ENCODE measurements at regions of chr19 and their contacts with region 1.

Region 1: DNA sequence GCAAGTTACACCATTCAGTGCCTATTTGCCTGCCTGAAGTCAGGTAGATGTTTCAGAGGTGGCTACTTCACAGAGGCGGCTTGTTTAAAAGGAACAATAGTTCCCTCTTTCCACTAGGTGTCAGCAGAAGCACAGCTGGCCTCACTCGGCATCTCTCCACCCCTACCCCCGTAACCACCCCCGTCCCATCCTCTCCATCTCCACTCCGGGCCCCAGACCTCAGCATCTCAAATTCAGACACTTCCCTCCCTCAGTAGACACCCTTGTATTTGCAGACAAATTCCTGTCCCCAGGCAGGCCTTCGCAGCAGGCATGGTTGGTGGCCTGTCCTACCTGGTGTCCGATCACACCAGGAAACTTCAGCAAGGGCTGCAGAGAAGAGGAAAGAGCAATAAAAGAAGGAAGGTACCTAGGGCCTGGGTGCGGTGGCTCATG is 9.1 kb upstream of the DPP9 start:
- DNase-seq: no peak
- ATAC-seq: peak; percentile 85

Region 2: GRCh38 chr19:4304530-4305252 is 428.0 kb before region 1 on chr19 and contains the start of gene FSD1:
- intact Hi-C with region 1: no loop called
- DNase-seq: no peak
- ATAC-seq: no peak
- total RNA-seq, gene FSD1: not detected

Region 3: GRCh38 chr19:4759388-4760284 is 26.9 kb after region 1 on chr19:
- intact Hi-C with region 1: no loop called
- DNase-seq: peak; percentile 96
- ATAC-seq: peak; percentile 96

Region 4: DNA sequence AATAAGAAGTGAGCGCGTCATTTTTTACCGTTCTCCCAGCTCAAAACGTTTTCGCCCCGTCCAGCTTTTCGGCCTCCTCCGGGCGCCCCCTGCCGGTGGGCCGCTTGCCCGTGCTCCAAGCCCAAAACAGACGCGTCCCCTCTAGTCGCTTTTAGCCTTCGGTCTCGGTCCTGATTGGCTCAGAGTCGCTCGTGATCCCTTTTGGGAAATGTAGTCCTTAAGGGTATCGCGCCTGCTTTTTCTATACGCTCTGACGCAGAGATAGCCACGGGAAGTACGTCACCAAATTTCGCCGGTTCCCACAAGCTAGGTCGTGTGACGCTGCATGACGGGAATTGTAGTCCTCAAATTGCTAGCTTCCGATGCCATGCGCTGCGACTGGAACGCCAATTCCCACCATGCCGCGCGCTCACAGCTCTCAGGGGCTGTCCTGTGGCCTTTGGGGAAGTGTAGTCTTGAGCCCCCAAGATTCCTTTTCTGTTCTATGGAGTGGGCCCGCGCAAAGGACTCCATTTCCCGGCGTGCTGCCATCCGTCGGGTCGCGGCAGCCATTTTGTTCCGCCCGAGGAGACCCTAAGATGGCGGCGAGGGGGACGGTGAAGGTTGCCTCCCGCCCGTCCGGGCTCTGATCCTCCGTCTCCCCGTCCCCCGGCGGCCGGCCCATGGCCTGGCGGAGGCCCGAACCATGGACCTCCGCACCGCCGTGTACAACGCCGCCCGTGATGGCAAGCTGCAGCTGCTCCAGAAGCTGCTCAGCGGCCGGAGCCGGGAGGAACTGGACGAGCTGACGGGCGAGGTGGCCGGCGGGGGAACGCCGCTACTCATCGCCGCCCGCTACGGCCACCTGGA is 58.7 kb after region 1 on chr19 and contains the start of gene FEM1A:
- intact Hi-C with region 1: loop called (anchors 1 kb)
- DNase-seq: peak; percentile 99
- ATAC-seq: peak; percentile 99
- total RNA-seq, gene FEM1A: 47.0 TPM

Region 5: DNA sequence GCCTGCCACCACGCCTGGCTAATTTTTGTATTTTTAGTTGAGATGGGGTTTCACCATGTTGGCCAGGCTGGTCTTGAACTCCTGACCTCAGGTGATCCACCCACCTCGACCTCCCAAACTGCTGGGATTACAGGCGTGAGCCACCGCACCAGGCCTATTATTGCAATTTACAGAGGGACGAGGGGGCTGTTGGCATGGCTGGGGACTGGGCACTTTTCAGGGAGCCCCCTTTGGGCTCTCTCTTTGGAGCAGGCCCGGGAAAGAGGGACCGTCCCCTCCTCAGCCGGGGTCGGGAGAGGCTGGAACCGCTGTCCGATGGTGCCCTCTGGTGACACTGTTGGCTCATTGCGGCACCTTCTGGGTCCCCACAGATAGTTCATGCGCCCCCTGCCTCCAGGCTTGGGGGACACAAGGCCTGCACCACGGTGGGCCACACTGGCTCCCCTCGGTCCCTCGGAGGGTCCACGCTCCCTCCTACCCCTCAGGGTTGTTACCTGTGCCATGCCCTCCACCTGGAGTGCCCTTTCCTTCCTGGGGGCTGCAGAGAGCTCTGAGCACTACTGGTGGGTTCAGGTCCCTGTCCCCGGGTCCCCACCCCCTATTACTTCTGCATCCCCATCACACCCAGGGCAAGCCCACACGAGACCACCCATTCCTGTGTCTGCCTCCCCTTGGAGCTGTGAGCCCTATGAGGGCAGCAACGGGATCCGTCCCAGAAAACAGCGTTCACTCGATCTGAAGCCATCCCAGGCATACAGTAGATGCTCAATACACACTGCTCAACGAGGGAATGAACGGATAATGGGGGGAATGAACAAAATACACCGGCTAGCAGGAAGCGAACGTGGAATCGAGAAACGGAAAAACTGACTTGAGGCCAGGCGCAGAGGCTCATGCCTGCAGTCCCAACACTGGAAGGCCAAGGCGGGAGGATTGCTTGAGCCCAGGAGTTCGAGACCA is 71.3 kb after region 1 on chr19:
- intact Hi-C with region 1: loop called (anchors 1 kb)
- DNase-seq: peak; percentile 83
- ATAC-seq: peak; percentile 62